H1 (cell line): ENCODE measurements at regions of chr12 and their contacts with region 1.

Region 1: GRCh38 chr12:98743347-98743953 is 98.4 kb downstream of the APAF1 start:
- DNase-seq: peak in 1 of 2 experiments; percentile 63
- H3K4me3 ChIP-seq: no peak overlapping the region
- H3K27ac ChIP-seq: no peak overlapping the region
- H3K4me1 ChIP-seq: peaks cover 0 to 12% (median 3%) of the 10 kb centered on the region in 4 experiments; a peak in 5 of 7 replicates
- H3K27me3 ChIP-seq: peaks cover 0 to 12% (median 7%) of the 10 kb centered on the region in 4 experiments; a peak in 5 of 7 replicates
- CTCF ChIP-seq: peak; percentile 63 to 85 (median 74)
- EP300 ChIP-seq: no peak
- POLR2A ChIP-seq: no peak
- RAD21 ChIP-seq: peak; percentile 50 to 62

Region 2: DNA sequence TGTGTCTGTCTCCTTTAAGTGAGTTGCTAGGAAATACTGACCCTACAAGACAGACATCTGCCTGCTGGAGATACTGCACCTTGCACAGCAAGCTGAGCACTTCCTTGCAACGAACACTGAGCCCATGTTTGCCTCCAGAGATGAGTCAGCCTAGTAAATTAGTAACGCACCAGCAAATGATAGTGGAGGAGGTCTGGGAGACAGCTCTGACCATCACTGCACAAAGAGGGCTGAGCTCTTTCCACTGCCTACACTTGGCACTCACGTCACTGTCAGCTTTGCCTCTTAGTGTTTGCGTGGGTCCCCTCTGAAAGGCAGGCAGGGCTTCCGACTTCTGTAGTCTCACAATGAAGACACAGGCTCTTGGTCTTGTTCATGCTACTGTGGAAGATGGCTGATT is 10.6 kb after region 1 on chr12:
- CTCF ChIA-PET with region 1: interaction called, 25 read pairs
- POLR2A ChIA-PET with region 1: no interaction called
- DNase-seq: no peak
- H3K4me3 ChIP-seq: no peak overlapping the region
- H3K27ac ChIP-seq: no peak overlapping the region
- H3K4me1 ChIP-seq: no peaks in the 10 kb centered on the region; a peak in 1 of 7 replicates
- H3K27me3 ChIP-seq: no peaks in the 10 kb centered on the region
- CTCF ChIP-seq: no peak
- EP300 ChIP-seq: no peak
- POLR2A ChIP-seq: no peak
- RAD21 ChIP-seq: no peak

Region 3: DNA sequence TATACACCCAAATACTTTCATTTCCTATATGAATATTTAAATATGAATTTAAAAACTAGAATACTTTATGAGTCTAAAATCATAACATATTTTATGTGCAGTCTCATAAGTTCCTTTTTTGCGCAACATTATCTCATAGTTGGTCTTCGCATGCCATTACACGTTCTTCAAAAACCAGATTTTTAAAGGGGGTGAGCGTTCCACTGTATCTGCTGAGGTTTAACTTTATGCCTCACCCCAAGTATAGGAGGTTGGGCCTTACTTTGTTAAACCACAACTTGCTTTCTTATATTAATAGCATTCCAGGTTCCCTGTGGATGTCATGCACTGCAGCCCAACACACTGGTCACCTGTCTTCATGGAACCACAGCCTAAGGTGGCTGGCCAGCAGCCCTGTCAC is 20.2 kb after region 1 on chr12:
- CTCF ChIA-PET with region 1: interaction called, 12 read pairs
- POLR2A ChIA-PET with region 1: no interaction called
- DNase-seq: no peak
- H3K4me3 ChIP-seq: no peak overlapping the region
- H3K27ac ChIP-seq: no peak overlapping the region
- H3K4me1 ChIP-seq: no peaks in the 10 kb centered on the region
- H3K27me3 ChIP-seq: no peaks in the 10 kb centered on the region
- CTCF ChIP-seq: no peak
- EP300 ChIP-seq: no peak
- POLR2A ChIP-seq: no peak
- RAD21 ChIP-seq: no peak

Region 4: GRCh38 chr12:98769068-98769467 is 25.6 kb after region 1 on chr12:
- CTCF ChIA-PET with region 1: interaction called, 10 read pairs
- POLR2A ChIA-PET with region 1: no interaction called
- DNase-seq: no peak
- H3K4me3 ChIP-seq: no peak overlapping the region
- H3K27ac ChIP-seq: no peak overlapping the region
- H3K4me1 ChIP-seq: no peaks in the 10 kb centered on the region
- H3K27me3 ChIP-seq: no peaks in the 10 kb centered on the region
- CTCF ChIP-seq: no peak
- EP300 ChIP-seq: no peak
- POLR2A ChIP-seq: no peak
- RAD21 ChIP-seq: no peak